ENCODE measurements at regions of chr4 and their contacts with region 1.

Region 1: DNA sequence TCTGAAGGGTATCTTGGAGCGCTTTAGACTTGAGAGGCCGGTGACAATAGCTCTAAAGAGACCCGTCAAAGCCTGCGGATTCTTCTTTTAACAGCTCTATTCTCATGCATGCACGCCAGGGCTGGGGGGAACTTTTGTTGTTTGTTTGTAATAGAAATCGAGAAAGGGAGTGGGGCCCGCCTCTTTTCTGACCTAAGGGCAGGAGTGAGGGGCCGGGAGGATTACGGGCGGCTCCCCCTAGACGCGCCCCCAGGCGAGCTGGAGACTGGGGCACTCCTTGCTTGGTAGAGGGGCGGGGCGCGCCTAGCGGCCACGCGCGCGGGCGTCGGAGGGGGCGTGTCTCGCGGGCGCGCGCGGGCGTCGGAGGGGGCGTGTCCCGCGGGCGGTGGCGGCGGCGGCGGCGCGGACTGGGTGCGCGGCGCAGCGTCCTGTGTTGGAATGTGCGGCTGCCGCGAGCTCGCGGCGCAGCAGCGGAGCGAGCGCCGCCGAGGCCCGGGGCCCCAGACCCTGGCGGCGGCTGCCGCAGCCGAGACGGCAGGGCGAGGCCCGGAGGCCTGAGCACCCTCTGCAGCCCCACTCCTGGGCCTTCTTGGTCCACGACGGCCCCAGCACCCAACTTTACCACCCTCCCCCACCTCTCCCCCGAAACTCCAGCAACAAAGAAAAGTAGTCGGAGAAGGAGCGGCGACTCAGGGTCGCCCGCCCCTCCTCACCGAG is at the start of gene REST:
- DNase-seq: peak; percentile 64
- H3K4me3 Mint-ChIP-seq: peak within 1 kb of the TSS; percentile 81
- H3K27ac Mint-ChIP-seq: peak within 1 kb of the TSS; percentile 65
- H3K4me1 Mint-ChIP-seq: peaks cover 43% of the 10 kb centered on the region
- H3K27me3 Mint-ChIP-seq: no peaks in the 10 kb centered on the region
- total RNA-seq, gene REST: 35.6 to 36.8 TPM

Region 2: DNA sequence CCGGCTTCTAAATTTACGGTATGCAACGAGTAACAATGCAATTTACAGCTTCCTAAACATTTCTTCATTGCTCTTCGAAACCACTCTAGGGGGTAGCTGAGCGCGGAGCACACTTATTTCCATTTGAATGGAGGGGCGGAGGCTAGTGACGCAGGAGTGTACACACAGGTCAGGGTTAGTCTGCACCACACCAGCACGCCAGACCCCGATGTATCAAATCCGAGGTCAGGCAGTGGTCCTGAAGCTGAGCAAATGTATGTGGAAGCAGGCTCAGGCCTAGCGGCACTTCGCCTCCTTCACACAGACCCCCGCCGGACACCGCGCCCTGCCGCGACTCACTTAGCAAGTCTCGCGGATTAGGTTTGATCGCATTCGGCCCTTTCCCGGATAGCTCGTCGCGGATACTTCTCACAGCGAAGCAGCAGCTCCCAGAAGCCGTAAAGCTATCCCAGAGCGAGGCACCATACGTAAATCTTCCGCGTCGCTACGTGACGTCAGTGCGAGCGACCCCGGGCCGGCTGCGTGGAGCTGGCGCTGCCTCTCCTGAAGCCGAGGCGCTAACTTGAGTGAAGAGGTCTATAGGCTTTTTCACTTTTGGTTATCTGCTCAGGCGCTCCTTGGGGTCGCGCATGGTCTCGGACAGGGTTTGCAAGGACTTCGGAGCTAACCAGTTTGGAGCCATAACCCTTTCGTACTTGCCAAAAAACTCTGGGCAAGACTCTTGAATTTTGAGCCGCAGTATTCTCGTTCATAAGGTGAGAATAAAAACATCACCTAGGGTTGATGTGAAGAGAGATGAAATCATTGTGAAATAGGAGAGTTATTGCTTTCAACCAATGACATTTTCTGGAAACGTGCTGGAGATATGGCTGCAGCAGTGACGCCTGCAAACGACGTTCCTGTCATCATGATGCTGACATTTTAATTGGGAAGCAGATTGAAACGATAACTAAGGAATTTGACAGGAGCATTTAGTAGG is 520.3 kb before region 1 on chr4 and contains the start of gene AASDH:
- CTCF ChIA-PET with region 1: no interaction called
- intact Hi-C with region 1: loop called (anchors 2 kb)
- DNase-seq: peak; percentile 97
- H3K4me3 Mint-ChIP-seq: peak within 1 kb of the TSS; percentile 87
- H3K27ac Mint-ChIP-seq: peak within 1 kb of the TSS; percentile 95
- H3K4me1 Mint-ChIP-seq: peaks cover 39% of the 10 kb centered on the region
- H3K27me3 Mint-ChIP-seq: no peaks in the 10 kb centered on the region
- total RNA-seq, gene AASDH: 13.5 to 17.0 TPM

Region 3: DNA sequence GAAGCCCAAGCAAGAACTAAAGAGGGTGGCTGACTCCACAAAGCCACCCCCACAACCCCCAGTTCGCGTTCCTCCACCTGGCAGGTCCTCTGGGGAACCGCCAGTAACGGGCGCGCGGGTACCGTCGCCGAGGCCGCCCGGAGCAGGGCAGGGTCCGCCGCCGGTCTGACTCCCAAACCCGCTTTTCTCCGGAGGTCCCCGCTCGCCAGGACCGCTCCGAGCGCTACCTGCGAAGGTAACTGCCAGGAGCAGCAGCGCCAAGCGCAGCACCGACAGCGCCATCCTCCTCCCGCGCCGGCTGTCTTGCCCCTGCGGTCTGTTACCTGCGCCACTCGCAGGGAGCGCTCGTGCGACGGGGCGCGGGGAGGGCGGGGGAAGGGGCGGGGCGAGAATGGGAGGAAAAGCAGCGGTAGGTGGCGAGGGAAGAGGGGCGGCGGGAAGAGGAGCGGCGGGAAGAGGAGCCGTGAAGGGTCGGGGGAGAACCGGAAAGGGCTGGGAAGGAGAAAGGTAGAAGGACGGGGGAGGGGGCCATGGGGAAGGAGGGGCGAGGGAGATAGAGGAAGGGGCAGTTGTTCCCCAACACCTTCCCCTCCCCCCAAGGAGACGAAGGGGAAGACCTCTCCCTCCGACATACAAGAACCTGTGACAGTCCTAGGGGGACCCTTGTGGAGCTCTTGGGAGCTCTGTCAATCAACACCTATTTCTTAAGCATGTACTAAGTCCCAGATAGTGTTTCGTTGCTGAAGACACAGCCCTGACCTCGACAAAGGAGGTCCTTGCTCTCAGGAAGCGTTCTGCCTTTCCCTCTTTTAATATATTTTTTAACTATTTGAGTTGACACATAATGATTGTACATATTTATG is 86.0 kb before region 1 on chr4 and contains the start of gene SPINK2:
- CTCF ChIA-PET with region 1: no interaction called
- intact Hi-C with region 1: loop called (anchors 2 kb)
- DNase-seq: peak; percentile 75
- H3K4me3 Mint-ChIP-seq: peak within 1 kb of the TSS; percentile 74
- H3K27ac Mint-ChIP-seq: no peak within 1 kb of the TSS
- H3K4me1 Mint-ChIP-seq: peaks cover 25% of the 10 kb centered on the region
- H3K27me3 Mint-ChIP-seq: peaks cover 12% of the 10 kb centered on the region
- total RNA-seq, gene SPINK2: 0.83 to 1.4 TPM

Region 4: DNA sequence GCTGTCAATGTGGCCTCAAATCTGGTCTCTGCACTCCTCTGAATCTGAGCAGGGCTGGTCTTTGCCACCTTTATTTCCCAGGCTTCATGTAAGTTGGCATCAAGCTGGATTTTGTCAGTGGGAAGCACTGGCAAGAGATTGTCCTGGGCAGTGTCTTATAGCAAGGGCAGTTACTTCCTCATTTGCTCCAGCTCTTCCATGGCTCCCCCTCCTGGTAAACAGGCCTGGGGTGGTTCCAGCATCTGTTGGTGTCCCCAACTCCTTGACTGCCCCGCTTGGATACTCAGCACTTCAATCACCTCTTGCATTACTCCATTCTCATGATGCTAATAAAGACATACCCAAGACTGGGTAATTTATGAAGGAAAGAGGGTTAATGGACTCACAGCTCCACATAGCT is 15.0 kb before region 1 on chr4:
- CTCF ChIA-PET with region 1: no interaction called
- intact Hi-C with region 1: no loop called
- DNase-seq: no peak
- H3K4me3 Mint-ChIP-seq: no peak overlapping the region
- H3K27ac Mint-ChIP-seq: no peak overlapping the region
- H3K4me1 Mint-ChIP-seq: no peaks in the 10 kb centered on the region
- H3K27me3 Mint-ChIP-seq: no peaks in the 10 kb centered on the region

Region 5: DNA sequence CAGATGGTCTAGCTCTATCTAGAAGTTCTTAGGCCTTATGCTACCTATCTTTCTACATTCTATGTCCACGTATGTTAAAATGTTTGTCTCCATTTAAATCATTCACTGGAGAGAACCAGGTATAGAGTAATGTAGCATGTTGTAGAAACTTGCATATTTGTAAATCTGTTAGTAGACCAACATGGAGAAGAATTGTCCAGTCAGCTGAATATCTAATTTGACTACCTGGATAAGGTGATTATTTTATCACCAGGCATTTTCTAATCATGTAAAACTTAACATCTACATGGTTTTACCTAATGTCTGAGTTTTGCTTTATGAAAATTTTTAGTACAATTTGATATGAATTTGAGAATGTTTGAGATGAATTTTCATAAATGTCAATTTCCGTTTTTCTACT is 19.5 kb after region 1 on chr4:
- CTCF ChIA-PET with region 1: interaction called, 3 read pairs
- intact Hi-C with region 1: loop called (anchors 1 kb)
- DNase-seq: no peak
- H3K4me3 Mint-ChIP-seq: no peak overlapping the region
- H3K27ac Mint-ChIP-seq: no peak overlapping the region
- H3K4me1 Mint-ChIP-seq: peaks cover 21% of the 10 kb centered on the region
- H3K27me3 Mint-ChIP-seq: no peaks in the 10 kb centered on the region

Measured in activated naive CD4-positive, alpha-beta T cell treated with anti-CD3 and anti-CD28 coated beads for 36 hours (primary cell).